ENCODE measurements at regions of chr7 and their contacts with region 1.

Region 1: DNA sequence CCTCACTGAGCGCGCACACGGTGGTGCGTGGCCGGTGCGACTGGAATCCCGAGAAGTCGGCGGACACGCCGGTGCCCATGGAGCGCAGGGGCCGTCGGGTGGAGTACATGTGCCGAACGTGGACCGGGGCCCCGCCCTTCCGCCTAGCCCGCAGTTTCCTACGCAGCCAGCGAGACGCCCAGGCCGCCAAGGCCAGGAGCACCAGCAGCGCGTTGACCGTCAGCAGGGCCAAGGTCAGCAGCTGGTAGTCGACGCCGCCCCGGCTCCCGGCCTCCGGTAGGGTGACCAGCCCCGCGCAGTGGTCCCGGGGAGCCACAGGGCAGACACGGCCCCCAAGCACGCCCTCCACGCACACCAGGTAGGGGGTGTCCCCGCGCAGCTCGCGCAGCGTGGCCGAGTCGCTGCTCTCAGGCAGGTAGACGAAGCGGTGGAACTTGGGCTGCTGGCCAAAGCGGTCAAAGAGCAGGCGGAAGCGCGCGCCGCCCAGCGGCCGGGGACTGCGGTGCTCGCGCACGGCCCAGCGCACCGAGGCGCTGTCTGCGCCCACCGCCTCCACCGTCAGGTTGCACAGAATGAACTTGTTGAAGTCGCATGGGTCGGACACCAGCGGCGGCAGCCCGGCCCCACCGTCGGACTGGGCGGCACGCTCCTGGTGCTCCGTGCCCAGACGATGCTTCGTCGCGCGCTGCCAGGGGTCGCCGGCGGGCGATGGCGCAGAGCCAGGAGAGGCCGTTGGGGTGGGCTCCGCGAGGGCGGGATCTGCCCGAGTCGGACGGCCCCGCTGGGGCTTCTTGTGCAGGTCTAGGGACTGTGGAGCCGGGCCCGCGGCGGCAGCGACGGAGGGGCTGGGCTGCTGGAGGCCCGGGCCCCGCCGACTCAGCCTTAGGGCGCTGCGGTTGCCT is 2.2 kb downstream of the TRIL start:
- DNase-seq: peak; percentile 47
- H3K4me3 Mint-ChIP-seq: peak overlapping the region; percentile 20
- H3K27ac Mint-ChIP-seq: no peak overlapping the region
- H3K4me1 Mint-ChIP-seq: peaks cover 9% of the 10 kb centered on the region
- H3K27me3 Mint-ChIP-seq: peaks cover 65% of the 10 kb centered on the region

Region 2: GRCh38 chr7:29038463-29038862 is 82.5 kb after region 1 on chr7:
- CTCF ChIA-PET with region 1: no interaction called
- POLR2A ChIA-PET with region 1: no interaction called
- intact Hi-C with region 1: no loop called
- DNase-seq: no peak
- H3K4me3 Mint-ChIP-seq: no peak overlapping the region
- H3K27ac Mint-ChIP-seq: no peak overlapping the region
- H3K4me1 Mint-ChIP-seq: peaks cover 16% of the 10 kb centered on the region
- H3K27me3 Mint-ChIP-seq: peaks cover 7% of the 10 kb centered on the region

Region 3: DNA sequence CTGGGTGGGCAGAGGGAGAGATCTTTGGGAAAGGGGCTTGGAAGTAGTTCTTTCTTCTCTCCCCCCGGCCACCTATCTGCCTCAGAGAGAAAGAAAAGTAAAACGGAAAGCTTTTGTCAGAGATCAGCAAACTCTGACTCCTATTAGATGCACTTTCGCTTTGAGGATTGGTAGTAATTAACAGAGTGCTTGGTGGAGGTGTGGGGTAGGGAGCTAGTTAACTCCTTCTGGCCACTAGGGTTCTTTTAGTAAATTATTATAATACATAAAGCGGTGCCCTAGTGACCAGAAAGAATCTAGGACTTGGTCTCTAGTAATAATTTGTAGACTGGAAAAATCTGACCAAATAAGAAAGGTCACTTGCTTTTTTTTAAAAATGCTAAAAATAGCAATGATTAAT is 135.7 kb after region 1 on chr7:
- CTCF ChIA-PET with region 1: interaction called, 6 read pairs
- POLR2A ChIA-PET with region 1: no interaction called
- intact Hi-C with region 1: loop called (anchors 5 kb)
- DNase-seq: peak; percentile 12
- H3K4me3 Mint-ChIP-seq: peak overlapping the region; percentile 75
- H3K27ac Mint-ChIP-seq: peak overlapping the region; percentile 75
- H3K4me1 Mint-ChIP-seq: peaks cover 14% of the 10 kb centered on the region
- H3K27me3 Mint-ChIP-seq: peaks cover 2% of the 10 kb centered on the region

Region 4: GRCh38 chr7:29105752-29106668 is 150.0 kb after region 1 on chr7:
- CTCF ChIA-PET with region 1: interaction called, 49 read pairs
- POLR2A ChIA-PET with region 1: no interaction called
- intact Hi-C with region 1: loop called (anchors 1 kb)
- DNase-seq: peak; percentile 12
- H3K4me3 Mint-ChIP-seq: no peak overlapping the region
- H3K27ac Mint-ChIP-seq: no peak overlapping the region
- H3K4me1 Mint-ChIP-seq: peaks cover 4% of the 10 kb centered on the region
- H3K27me3 Mint-ChIP-seq: peaks cover 7% of the 10 kb centered on the region

Region 5: DNA sequence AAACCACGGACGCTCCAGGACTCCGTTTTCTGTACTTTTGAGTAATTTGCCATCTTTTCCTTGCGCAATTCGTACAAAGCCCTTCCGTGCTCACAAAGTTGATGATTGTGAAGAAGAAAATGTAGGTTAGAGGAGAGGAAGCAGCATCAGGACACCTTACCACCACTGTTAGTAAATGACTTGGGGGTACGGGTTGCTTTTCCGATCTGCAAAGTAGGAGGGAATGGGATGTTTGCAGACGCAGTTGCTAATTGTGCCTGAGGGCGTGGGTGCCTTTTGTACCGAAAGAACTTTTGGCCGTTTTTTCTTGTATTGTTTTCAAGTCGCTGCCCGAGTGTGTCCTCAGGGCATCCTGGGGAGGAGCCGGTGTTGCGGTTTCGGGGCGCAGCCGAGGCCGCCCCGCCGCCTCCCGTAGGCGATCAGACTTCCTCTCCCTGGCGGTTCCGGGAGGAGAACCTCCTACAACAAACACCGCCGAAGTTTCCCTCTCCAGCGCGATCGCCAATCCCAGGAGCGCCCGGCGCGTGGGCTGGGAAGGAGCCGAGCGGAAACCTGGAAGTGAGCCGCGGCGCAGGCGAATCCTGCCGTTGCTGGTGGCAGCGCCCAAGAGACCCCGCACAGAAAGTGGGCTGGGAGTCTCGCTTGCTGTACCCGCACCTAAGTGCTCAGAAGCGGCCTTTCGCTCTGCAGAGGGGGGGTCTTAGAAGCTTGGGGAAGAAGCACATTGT is 608.7 kb after region 1 on chr7:
- CTCF ChIA-PET with region 1: no interaction called
- POLR2A ChIA-PET with region 1: no interaction called
- intact Hi-C with region 1: loop called (anchors 10 kb)
- DNase-seq: peak; percentile 9
- H3K4me3 Mint-ChIP-seq: peak overlapping the region; percentile 43
- H3K27ac Mint-ChIP-seq: no peak overlapping the region
- H3K4me1 Mint-ChIP-seq: peaks cover 21% of the 10 kb centered on the region
- H3K27me3 Mint-ChIP-seq: peaks cover 65% of the 10 kb centered on the region